Endothelial cell of umbilical vein (primary cell): ENCODE measurements at regions of chr11 and their contacts with region 1.

Region 1: DNA sequence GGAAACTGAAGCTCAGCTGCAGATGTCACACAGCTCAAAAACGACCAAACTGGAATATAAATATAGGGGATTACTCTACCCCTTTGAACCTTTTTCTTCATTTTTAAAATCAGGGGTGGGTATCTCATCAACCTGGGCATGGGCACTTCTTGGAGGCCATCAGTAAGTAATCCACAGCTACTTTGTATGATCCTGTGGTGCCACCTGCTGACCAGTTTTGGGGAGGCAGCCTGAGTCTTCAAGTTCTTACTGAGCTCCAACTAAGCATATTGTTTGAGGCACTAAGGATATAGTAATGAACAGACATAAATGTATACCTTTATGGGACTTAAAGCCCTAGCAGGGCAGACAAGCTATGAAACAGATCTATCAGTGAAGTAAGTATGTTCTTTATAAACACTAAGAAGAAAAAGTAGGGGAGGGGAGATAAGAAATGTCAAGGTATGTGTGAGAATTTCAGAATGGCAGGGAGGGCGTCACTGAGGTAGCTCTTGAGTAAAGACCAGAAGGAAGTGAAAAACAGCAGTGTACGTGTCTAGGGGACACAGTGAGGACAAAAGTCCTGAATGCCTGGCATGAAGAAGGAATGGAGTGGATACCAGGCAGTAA is 18.4 kb downstream of the TUB start:
- DNase-seq: peak; percentile 87
- H3K4me3 ChIP-seq: no peak overlapping the region
- H3K27ac ChIP-seq: no peak overlapping the region
- H3K4me1 ChIP-seq: no peaks in the 10 kb centered on the region
- H3K27me3 ChIP-seq: no peaks in the 10 kb centered on the region
- CTCF ChIP-seq: peak; percentile 68 to 76
- POLR2A ChIP-seq: no peak

Region 2: GRCh38 chr11:7098235-7098832 is 1001.1 kb before region 1 on chr11:
- CTCF ChIA-PET with region 1: interaction called, 10 read pairs
- POLR2A ChIA-PET with region 1: no interaction called
- dilution Hi-C with region 1: no loop called
- intact Hi-C with region 1: no loop called
- DNase-seq: peak; percentile 67
- H3K4me3 ChIP-seq: no peak overlapping the region
- H3K27ac ChIP-seq: no peak overlapping the region
- H3K4me1 ChIP-seq: no peaks in the 10 kb centered on the region
- H3K27me3 ChIP-seq: peaks cover 0 to 11% of the 10 kb centered on the region in 2 experiments
- CTCF ChIP-seq: peak; percentile 37 to 51
- POLR2A ChIP-seq: no peak

Region 3: DNA sequence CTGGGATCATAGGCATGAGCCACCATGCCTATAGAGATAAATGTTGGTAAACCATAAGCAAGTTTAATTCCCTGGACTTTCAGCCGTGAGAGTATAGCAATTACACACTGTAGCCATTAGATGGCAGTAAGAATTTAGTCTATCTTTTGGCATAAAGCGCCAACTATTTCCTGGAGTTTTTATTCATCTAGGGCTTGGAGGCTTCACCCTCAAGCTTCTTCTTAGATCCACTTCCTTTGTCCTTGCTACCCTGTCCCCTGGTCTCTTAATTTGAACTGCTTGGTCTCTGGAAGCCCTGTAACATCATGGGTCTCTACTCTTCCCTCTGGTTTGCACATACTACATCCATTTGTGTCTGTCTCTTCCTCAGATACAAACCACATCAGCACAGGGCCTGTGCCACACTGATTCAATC is 206.5 kb before region 1 on chr11:
- CTCF ChIA-PET with region 1: interaction called, 18 read pairs
- POLR2A ChIA-PET with region 1: no interaction called
- dilution Hi-C with region 1: no loop called
- intact Hi-C with region 1: loop called (anchors 2 kb)
- DNase-seq: peak; percentile 68
- H3K4me3 ChIP-seq: no peak overlapping the region
- H3K27ac ChIP-seq: no peak overlapping the region
- H3K4me1 ChIP-seq: peaks cover 4% of the 10 kb centered on the region
- H3K27me3 ChIP-seq: peaks cover 12 to 17% of the 10 kb centered on the region in 2 experiments
- CTCF ChIP-seq: peak; percentile 61 to 66
- POLR2A ChIP-seq: no peak

Region 4: DNA sequence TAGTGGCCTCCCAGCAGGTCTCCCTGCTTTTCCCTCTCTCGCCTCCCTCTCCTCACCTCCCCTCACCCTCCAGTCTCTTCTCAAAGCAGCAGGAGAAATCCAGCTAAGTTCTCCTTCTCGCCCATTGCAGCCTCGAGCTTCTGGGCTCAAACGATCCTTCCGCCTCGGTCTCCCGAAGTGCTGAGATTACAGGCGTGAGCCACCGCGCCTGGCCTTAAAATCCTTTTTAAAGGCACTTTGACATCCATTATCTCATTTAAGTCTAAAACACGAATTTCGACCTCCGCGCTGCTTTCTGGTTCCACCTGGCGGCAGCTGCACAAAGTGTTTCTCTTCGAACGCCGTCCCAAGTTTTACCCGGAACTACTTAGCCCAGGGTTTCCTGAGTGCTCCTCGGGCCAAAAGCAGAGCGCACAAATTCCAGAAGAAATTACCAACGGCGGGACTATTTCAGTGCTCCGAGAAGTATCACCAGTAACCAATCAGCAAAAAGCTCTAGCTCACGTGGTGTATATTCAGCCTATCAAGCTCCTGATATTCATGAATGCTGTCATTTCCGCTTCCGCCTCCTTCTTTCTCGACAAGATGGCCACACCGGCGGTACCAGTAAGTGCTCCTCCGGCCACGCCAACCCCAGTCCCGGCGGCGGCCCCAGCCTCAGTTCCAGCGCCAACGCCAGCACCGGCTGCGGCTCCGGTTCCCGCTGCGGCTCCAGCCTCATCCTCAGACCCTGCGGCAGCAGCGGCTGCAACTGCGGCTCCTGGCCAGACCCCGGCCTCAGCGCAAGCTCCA is 112.4 kb before region 1 on chr11 and contains the start of gene EIF3F:
- CTCF ChIA-PET with region 1: interaction called, 15 read pairs
- POLR2A ChIA-PET with region 1: no interaction called
- dilution Hi-C with region 1: no loop called
- intact Hi-C with region 1: no loop called
- DNase-seq: peak; percentile 100
- H3K4me3 ChIP-seq: peak within 1 kb of the TSS; percentile 71 to 99 (median 98)
- H3K27ac ChIP-seq: peak within 1 kb of the TSS; percentile 67
- H3K4me1 ChIP-seq: peaks cover 41% of the 10 kb centered on the region
- H3K27me3 ChIP-seq: no peaks in the 10 kb centered on the region
- CTCF ChIP-seq: peak; percentile 77 to 84
- POLR2A ChIP-seq: peak; percentile 53
- total RNA-seq, gene EIF3F: 385 and 436 TPM in 2 replicates

Region 5: DNA sequence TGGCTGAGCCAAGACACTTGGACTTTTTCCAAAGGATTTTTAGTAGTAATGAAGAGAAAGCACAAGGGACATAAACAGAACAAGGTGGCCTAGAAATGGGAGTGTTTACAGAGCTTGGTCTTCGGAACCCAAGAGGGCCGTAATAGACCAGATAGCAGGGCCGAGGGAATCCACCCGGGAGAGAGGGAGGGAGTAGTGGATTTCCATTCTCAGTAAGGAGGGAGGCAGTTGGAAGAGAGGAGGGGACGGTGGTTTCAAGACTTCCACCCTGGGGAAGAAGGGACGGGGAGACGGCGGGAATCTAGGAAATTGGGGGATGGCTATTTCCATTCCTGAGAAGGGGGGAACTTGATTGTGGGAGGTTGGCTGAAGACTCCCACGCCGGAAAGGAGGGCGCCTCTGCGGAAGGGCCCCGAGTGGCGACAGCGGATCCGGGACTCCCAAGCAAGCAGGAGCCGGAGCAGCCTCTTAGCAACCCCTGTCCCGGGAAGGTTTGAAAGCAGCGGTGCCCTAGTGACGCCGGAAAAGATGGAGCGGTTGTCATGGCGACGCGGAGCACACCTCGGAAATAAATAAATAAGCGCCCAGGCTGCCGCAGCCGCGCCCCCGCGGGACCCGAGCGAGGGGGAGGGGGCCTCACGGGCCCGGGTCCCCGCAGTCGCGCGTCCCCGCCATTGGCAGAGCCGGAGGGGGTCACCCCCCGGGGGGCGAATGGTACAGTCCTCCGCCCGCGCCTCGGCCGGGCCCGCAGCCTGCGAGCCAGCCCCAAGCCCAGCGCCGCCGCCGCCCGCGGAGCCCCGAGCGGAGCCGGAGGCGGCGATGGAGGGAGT is 80.7 kb before region 1 on chr11:
- CTCF ChIA-PET with region 1: interaction called, 14 read pairs
- POLR2A ChIA-PET with region 1: no interaction called
- dilution Hi-C with region 1: no loop called
- intact Hi-C with region 1: no loop called
- DNase-seq: peak; percentile 30
- H3K4me3 ChIP-seq: peak overlapping the region; percentile 25 to 39 (median 36)
- H3K27ac ChIP-seq: no peak overlapping the region
- H3K4me1 ChIP-seq: peaks cover 5% of the 10 kb centered on the region
- H3K27me3 ChIP-seq: peaks cover 37 to 43% of the 10 kb centered on the region in 2 experiments
- CTCF ChIP-seq: no peak
- POLR2A ChIP-seq: no peak

Region 6: DNA sequence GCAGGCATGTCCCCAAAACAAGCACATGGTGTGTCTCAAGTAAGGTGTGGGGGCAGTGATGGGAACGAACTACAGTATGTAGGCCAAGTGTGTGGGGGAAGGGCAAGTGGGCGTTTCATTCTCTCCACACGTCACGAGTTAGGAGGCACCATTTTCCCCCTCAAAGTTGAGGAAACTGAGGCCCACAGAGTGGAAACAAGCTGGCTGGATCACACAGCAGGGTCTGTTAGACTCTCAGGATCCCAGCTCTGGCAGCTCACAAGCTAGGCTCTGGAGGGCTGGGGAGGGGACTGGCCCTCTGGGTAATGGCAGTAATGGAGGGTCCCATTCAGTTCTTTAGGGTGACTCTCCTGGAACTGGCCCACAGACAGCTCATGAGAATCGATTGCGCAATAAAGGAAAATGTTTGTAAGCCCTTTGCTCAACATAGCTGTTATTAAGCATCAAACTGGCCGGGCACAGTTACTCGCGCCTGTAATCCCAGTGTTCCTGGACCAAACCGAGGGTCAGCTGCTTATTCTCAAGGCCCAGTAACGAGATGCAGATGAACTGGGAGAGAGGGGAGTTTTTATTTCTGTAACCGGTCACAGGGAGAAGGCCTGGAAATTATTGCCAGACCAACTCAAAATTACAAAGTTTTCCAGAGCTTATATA is 42.5 kb before region 1 on chr11:
- CTCF ChIA-PET with region 1: interaction called, 14 read pairs
- POLR2A ChIA-PET with region 1: no interaction called
- dilution Hi-C with region 1: no loop called
- intact Hi-C with region 1: no loop called
- DNase-seq: no peak
- H3K4me3 ChIP-seq: no peak overlapping the region
- H3K27ac ChIP-seq: no peak overlapping the region
- H3K4me1 ChIP-seq: no peaks in the 10 kb centered on the region
- H3K27me3 ChIP-seq: no peaks in the 10 kb centered on the region
- CTCF ChIP-seq: no peak
- POLR2A ChIP-seq: no peak

Region 7: GRCh38 chr11:8110396-8110795 is 11.0 kb after region 1 on chr11:
- CTCF ChIA-PET with region 1: interaction called, 16 read pairs
- POLR2A ChIA-PET with region 1: no interaction called
- dilution Hi-C with region 1: no loop called
- intact Hi-C with region 1: no loop called
- DNase-seq: no peak
- H3K4me3 ChIP-seq: no peak overlapping the region
- H3K27ac ChIP-seq: no peak overlapping the region
- H3K4me1 ChIP-seq: no peaks in the 10 kb centered on the region
- H3K27me3 ChIP-seq: peaks cover 0 to 2% of the 10 kb centered on the region in 2 experiments
- CTCF ChIP-seq: no peak
- POLR2A ChIP-seq: no peak